BJ (cell line): ENCODE measurements at regions of chr6 and their contacts with region 1.

Region 1: GRCh38 chr6:125986300-125987025 is at the start of gene TRMT11:
- DNase-seq: no peak
- H3K4me3 ChIP-seq: peak within 1 kb of the TSS; percentile 73
- H3K27me3 ChIP-seq: no peaks in the 10 kb centered on the region
- CTCF ChIP-seq: no peak
- polyA plus RNA-seq, gene TRMT11: 10.1 and 19.0 TPM in 2 replicates

Region 2: DNA sequence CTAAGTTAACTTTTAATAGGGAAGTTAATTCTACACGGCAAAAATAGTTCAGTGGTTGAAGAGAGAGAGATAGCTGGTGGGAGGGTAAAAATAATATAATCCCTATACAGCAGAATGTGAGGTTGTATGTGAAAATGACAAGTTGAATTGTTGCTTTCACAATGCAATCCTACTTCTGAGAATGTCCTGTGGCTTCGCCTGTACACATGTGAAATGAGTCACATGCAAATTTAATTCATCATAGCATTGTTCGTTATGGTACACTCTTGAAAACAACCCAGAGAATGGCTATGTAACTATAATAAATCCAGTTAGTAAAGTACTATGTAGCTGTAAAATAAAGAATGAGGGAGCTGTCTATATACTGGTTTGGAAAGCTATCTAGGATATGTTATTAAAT is 75.9 kb before region 1 on chr6:
- CTCF ChIA-PET with region 1: no interaction called
- POLR2A ChIA-PET with region 1: no interaction called
- DNase-seq: no peak
- H3K4me3 ChIP-seq: no peak overlapping the region
- H3K27me3 ChIP-seq: no peaks in the 10 kb centered on the region
- CTCF ChIP-seq: no peak

Region 3: DNA sequence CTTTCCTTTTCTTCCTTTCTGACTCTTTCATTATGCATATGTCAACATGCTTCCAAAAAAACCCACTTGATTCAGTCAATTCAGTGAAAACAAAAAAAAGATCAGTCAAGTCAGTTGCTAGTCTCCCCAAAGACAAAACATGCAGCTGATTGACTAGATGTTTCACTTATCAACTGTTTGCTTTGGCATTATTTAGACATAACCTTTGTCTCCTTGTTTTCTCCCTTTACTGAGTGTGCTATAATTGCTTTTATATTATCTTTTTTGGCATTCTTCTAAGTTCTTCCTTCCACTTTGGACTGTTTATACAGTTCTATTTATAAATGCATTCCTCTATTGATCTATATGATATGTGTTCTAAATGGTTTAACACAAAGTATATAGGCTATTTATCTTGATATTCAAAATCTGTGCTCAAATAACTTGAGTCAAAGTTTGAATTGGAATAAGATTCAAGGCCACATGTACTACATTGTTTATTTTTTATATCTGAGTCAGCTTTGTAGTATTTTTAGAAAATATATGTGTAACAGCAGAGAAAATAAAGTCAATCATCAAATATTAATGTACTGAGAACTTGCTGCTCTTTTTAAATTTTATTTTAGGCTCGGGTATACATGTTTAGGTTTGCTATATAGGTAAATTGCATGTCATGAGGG is 613.9 kb after region 1 on chr6:
- CTCF ChIA-PET with region 1: no interaction called
- POLR2A ChIA-PET with region 1: interaction called, 24 read pairs
- DNase-seq: no peak
- H3K4me3 ChIP-seq: no peak overlapping the region
- H3K27me3 ChIP-seq: no peaks in the 10 kb centered on the region
- CTCF ChIP-seq: no peak